ENCODE measurements at regions of chr9 and their contacts with region 1.

Region 1: DNA sequence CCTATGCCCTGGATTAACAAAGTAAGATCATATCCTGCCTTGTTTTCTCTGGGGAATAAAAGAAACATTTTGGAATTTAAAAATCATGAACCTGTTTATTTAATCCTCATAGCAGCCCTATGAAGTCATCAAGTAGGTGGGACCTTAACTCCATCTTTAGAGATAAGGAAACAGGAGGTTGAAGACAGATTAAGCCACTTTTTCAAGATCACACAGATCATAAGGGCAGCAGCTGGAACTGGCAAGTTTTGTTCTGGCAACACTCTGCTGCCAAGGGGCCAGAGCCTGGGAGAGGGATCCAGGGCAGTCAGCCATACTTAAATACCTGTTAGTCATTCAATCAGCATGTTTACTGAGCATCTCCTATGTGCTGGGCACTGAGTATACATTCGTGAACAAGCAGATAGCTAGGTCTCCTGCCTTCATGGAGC is 63.7 kb downstream of the SLC1A1 start:
- DNase-seq: no peak
- H3K4me3 Mint-ChIP-seq: no peak overlapping the region
- H3K27ac Mint-ChIP-seq: no peak overlapping the region
- H3K4me1 Mint-ChIP-seq: peaks cover 12% of the 10 kb centered on the region
- H3K27me3 Mint-ChIP-seq: no peaks in the 10 kb centered on the region

Region 2: GRCh38 chr9:4147476-4148230 is 406.3 kb before region 1 on chr9:
- intact Hi-C with region 1: no loop called
- DNase-seq: no peak
- H3K4me3 Mint-ChIP-seq: no peak overlapping the region
- H3K27ac Mint-ChIP-seq: no peak overlapping the region
- H3K4me1 Mint-ChIP-seq: no peaks in the 10 kb centered on the region
- H3K27me3 Mint-ChIP-seq: peaks cover 9% of the 10 kb centered on the region

Region 3: GRCh38 chr9:4365055-4365454 is 188.9 kb before region 1 on chr9:
- intact Hi-C with region 1: no loop called
- DNase-seq: no peak
- H3K4me3 Mint-ChIP-seq: no peak overlapping the region
- H3K27ac Mint-ChIP-seq: no peak overlapping the region
- H3K4me1 Mint-ChIP-seq: no peaks in the 10 kb centered on the region
- H3K27me3 Mint-ChIP-seq: peaks cover 6% of the 10 kb centered on the region

Region 4: DNA sequence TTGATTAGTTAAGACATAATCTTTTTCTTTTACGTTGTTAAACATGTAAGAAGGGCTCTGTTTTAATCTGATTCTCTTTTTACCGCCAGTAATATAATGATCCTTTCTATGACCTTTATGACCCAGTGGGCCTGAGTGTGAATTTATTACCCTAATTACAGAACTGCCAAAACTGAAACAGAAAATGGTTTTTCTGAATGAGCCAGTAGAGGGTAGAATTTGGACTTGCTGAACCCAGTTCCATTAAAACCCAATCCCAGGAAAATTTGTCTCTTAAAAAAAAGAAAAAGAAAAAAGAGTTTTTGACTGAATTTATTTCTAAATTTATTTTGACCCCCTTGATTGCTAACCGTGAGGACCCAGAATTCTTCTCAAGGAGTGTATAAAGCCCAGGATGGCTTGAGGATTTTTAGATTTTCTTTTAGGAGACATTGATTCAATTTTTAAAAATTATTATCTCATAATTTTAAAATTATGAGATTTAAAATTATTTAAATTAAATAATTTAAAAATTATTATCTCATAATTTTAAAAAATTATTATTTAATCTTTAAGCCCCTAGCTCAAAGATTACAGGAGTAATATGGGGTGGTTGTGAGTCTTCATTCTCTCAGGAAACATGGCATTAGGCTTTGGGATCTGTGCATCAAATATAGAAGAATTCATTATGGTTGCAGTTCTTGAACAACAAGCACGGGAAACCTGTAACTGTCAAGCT is 160.0 kb before region 1 on chr9:
- intact Hi-C with region 1: loop called (anchors 5 kb)
- DNase-seq: no peak
- H3K4me3 Mint-ChIP-seq: no peak overlapping the region
- H3K27ac Mint-ChIP-seq: no peak overlapping the region
- H3K4me1 Mint-ChIP-seq: no peaks in the 10 kb centered on the region
- H3K27me3 Mint-ChIP-seq: peaks cover 2% of the 10 kb centered on the region

Region 5: GRCh38 chr9:4574657-4575243 is 20.8 kb after region 1 on chr9:
- intact Hi-C with region 1: no loop called
- DNase-seq: no peak
- H3K4me3 Mint-ChIP-seq: no peak overlapping the region
- H3K27ac Mint-ChIP-seq: no peak overlapping the region
- H3K4me1 Mint-ChIP-seq: peaks cover 32% of the 10 kb centered on the region
- H3K27me3 Mint-ChIP-seq: no peaks in the 10 kb centered on the region

Measured in activated T-helper 1 cell treated with anti-CD3 and anti-CD28 coated beads, Interleukin-12 subunit alpha, Interleukin-12 subunit beta, Interleukin-2, Interleukin-4 antibody, amounts not matched to agents 30 ng/mL and 10 ng/mL and 1 ng/mL, durations not matched to agents 14 hours and 24 hours and 36 hours (primary cell).